ENCODE measurements at regions of chr1 and their contacts with region 1.

Region 1: GRCh38 chr1:64469977-64470664 is at the start of gene CACHD1:
- DNase-seq: peak; percentile 95
- H3K4me3 ChIP-seq: peak within 1 kb of the TSS; percentile 76
- H3K27ac ChIP-seq: peak within 1 kb of the TSS; percentile 93
- H3K4me1 ChIP-seq: peaks cover 35% of the 10 kb centered on the region
- H3K27me3 ChIP-seq: no peaks in the 10 kb centered on the region
- CTCF ChIP-seq: peak; percentile 46
- total RNA-seq, gene CACHD1: 39.2 and 42.6 TPM in 2 replicates

Region 2: GRCh38 chr1:64320470-64320869 is 149.7 kb before region 1 on chr1:
- CTCF ChIA-PET with region 1: no interaction called
- POLR2A ChIA-PET with region 1: no interaction called
- intact Hi-C with region 1: no loop called
- DNase-seq: peak; percentile 58
- H3K4me3 ChIP-seq: no peak overlapping the region
- H3K27ac ChIP-seq: peak overlapping the region; percentile 12
- H3K4me1 ChIP-seq: peaks cover 15% of the 10 kb centered on the region
- H3K27me3 ChIP-seq: no peaks in the 10 kb centered on the region
- CTCF ChIP-seq: no peak

Region 3: DNA sequence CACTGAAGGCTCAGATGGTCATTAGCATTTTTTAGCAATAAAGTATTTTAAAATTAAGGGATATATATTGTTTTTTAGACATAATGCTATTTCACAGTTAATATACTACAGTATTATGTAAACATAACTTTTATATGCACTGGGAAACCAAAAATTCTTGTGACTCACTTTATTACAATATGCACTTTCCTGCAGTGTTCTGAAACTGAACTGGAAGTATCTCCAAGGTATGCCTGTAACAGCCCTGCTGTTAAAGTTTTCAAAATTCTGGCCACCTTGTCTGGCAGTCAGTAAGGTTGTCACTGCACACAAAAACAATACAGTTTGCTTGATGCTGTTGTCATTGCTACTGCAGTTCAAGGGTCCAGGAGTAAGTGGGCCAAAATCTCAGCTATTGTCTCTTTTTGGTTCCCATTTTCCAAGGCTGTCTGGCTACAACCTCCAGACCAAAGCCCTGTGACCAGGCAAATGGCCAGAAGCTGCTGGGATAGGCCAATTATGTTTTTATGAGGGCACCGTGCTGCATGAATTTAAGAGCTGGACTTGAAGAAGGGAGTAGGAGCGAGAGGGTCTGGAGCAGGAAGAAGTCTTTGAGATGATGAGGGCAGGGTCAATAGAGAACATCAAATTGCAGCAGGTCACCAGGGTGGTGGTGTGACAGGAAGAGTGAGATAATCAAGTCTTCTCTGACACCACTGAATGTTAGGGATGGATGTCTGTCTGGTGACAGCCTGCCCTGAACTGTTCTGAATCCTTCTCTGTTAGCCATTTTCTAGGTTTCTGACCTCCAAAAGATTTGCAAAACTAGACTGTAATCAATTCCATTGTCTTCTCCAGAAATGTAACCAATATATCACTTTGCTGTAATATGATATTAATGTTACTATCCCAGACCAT is 82.5 kb before region 1 on chr1:
- CTCF ChIA-PET with region 1: no interaction called
- POLR2A ChIA-PET with region 1: interaction called, 12 read pairs
- intact Hi-C with region 1: no loop called
- DNase-seq: no peak
- H3K4me3 ChIP-seq: no peak overlapping the region
- H3K27ac ChIP-seq: no peak overlapping the region
- H3K4me1 ChIP-seq: no peaks in the 10 kb centered on the region
- H3K27me3 ChIP-seq: no peaks in the 10 kb centered on the region
- CTCF ChIP-seq: no peak

Region 4: DNA sequence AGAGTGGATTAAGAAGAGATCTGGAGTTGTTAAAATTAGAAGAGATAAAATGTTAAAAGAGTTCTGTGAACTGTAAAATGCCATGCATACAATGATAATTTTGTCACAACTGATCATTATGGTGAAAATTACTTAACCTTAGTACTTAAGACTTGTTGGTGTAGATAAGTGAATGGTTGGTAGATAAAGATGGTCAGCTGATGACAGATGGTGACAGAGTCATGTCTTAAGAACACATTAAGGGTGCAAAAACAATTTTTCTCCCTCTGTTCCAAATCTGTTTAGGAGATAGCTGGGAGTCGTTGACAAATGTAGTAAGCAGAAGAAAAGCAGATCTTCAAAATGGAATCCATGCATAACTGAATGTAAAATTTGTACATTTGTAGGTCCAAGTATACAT is 18.7 kb before region 1 on chr1:
- CTCF ChIA-PET with region 1: no interaction called
- POLR2A ChIA-PET with region 1: no interaction called
- intact Hi-C with region 1: no loop called
- DNase-seq: no peak
- H3K4me3 ChIP-seq: no peak overlapping the region
- H3K27ac ChIP-seq: no peak overlapping the region
- H3K4me1 ChIP-seq: no peaks in the 10 kb centered on the region
- H3K27me3 ChIP-seq: no peaks in the 10 kb centered on the region
- CTCF ChIP-seq: no peak

Region 5: DNA sequence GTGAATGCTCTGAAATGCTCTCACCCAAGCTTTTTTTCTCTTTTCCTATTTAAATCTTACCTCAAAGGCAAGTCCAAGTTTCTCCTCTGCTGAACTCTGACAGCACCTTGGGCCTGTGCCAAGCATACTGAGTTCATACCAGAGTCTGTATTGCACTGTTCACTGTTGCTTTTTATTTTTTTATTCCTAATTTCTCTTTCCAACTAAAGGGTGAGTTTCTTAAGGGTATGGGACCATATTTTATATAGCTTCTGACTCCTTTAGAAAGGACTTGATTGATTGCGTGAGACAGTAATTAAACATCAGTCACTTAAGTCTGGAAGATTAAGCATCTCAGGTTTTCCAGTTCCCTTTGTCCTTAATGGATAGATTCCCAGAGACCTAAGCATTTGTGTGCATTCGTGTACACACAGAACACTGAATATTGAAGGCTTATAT is 69.7 kb after region 1 on chr1:
- CTCF ChIA-PET with region 1: no interaction called
- POLR2A ChIA-PET with region 1: no interaction called
- intact Hi-C with region 1: loop called (anchors 5 kb)
- DNase-seq: peak; percentile 60
- H3K4me3 ChIP-seq: peak overlapping the region; percentile 31
- H3K27ac ChIP-seq: peak overlapping the region; percentile 79
- H3K4me1 ChIP-seq: peaks cover 73% of the 10 kb centered on the region
- H3K27me3 ChIP-seq: no peaks in the 10 kb centered on the region
- CTCF ChIP-seq: no peak

Region 6: DNA sequence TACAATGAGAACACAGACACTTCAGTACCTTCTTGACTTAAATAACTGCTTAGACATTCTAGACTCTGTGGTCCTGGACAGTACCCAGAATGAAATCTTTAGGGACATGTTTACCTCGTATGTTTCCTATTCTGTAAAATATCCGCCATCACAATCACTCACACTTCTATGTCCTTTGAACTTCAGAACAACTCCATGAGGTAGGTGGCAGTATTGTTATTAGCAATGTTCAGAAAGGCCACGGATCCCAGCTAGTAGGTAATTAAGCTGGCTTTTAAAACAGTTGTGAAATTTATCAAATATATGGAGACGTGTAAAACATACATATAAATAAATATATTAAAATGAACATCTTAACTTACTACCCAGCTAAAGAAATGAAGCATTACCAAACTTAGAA is 83.2 kb after region 1 on chr1:
- CTCF ChIA-PET with region 1: no interaction called
- POLR2A ChIA-PET with region 1: no interaction called
- intact Hi-C with region 1: no loop called
- DNase-seq: no peak
- H3K4me3 ChIP-seq: no peak overlapping the region
- H3K27ac ChIP-seq: no peak overlapping the region
- H3K4me1 ChIP-seq: peaks cover 39% of the 10 kb centered on the region
- H3K27me3 ChIP-seq: no peaks in the 10 kb centered on the region
- CTCF ChIP-seq: peak; percentile 40; the same call in 1 of the 2 replicates

Region 7: GRCh38 chr1:64654519-64655341 is 184.6 kb after region 1 on chr1:
- CTCF ChIA-PET with region 1: no interaction called
- POLR2A ChIA-PET with region 1: no interaction called
- intact Hi-C with region 1: loop called (anchors 5 kb)
- DNase-seq: peak; percentile 78
- H3K4me3 ChIP-seq: no peak overlapping the region
- H3K27ac ChIP-seq: no peak overlapping the region
- H3K4me1 ChIP-seq: peaks cover 14% of the 10 kb centered on the region
- H3K27me3 ChIP-seq: no peaks in the 10 kb centered on the region
- CTCF ChIP-seq: peak; percentile 59

Measured in A673 (cell line).